Heart right ventricle (tissue), 16 donors: ENCODE measurements at regions of chr21 and their contacts with region 1.

Region 1: DNA sequence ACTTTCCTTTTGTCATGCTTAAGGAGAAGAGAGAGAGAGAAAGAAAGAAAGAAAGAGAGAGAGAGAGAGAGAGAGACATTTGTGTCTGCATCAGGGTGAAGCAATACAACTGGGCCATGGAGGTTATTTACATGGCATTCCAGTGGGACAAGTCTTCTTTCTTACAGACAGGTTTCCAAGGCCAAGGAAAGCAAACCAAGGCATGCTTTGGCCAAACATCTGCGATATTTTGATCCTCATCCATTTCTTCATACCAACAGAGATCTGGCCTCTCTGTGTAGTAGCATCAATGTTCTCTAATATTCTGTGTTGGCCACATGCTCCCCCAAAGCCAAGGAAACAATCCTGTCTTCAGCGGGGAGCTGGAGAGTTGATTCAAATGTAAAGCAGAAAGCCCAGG is 292.1 kb downstream of the SETD4 start:
- DNase-seq: no peak
- ATAC-seq: peak in 3 of 8 donors; percentile 29 to 60 (median 40)
- H3K4me3 ChIP-seq: no peak overlapping the region
- H3K27ac ChIP-seq: peak overlapping the region in 3 of 10 donors; percentile 31 to 67 (median 43)
- H3K4me1 ChIP-seq: peaks cover 0 to 7% (median 0%) of the 10 kb centered on the region in 9 donors
- H3K27me3 ChIP-seq: peaks cover 0 to 3% (median 0%) of the 10 kb centered on the region in 7 donors
- CTCF ChIP-seq: no peak

Region 2: GRCh38 chr21:35818597-35818996 is 50.4 kb after region 1 on chr21:
- intact Hi-C with region 1: loop called in 1 of 10 experiments (anchors 1 kb)
- DNase-seq: no peak
- ATAC-seq: no peak
- H3K4me3 ChIP-seq: no peak overlapping the region
- H3K27ac ChIP-seq: no peak overlapping the region
- H3K4me1 ChIP-seq: peaks cover 0 to 7% (median 0%) of the 10 kb centered on the region in 9 donors
- H3K27me3 ChIP-seq: peaks cover 0 to 6% (median 0%) of the 10 kb centered on the region in 7 donors
- CTCF ChIP-seq: no peak